PC-3 (cell line): ENCODE measurements at regions of chr1 and their contacts with region 1.

Region 1: DNA sequence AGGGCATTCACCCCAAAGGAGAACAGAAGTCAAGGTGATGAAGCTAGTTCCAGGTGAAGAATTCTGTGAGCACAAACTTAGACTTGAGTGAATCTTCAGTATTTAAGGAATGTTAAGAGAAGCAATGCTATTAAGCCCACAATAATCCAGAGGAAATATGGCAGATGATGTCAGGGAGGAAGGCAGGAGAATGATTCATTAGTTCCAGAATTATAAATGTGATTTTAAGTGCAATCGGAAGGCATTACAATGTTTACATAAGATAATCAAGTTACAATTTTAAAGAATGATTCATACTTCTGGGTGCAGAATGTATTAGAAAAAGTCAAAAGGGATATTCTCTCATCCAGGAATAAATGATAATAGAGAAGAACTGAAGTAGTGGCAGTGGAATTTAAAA is 545.2 kb upstream of the BRINP3 start:
- DNase-seq: peak; percentile 83
- ATAC-seq: peak; percentile 85
- H3K4me3 ChIP-seq: no peak overlapping the region
- H3K27ac ChIP-seq: peak overlapping the region; percentile 55
- H3K4me1 ChIP-seq: peaks cover 17% of the 10 kb centered on the region
- H3K27me3 ChIP-seq: no peaks in the 10 kb centered on the region
- CTCF ChIP-seq: no peak

Region 2: DNA sequence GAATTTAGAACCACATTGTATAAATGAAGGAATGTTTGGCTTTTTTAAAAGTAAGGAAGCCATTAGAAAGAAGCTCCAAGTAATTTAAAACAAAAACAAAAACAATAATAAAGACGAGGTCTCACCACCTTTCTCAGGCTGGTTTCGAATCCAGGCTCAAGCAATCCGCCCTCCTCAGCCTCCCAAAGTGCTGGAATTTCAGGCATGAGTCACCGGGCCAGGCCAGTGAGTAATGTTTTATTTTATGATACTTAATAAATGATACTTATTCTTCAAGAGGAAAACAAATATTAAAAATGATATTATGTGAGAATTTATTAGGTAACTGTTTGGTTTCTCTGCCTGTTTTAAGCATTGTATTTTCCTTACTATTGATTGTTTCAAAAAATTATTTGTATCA is 343.8 kb before region 1 on chr1:
- CTCF ChIA-PET with region 1: no interaction called
- POLR2A ChIA-PET with region 1: no interaction called
- intact Hi-C with region 1: loop called (anchors 1 kb)
- DNase-seq: peak; percentile 85
- ATAC-seq: peak; percentile 97
- H3K4me3 ChIP-seq: no peak overlapping the region
- H3K27ac ChIP-seq: no peak overlapping the region
- H3K4me1 ChIP-seq: peaks cover 10% of the 10 kb centered on the region
- H3K27me3 ChIP-seq: 0 out of 2 replicates have a peak, but pooled peaks cover 5% of the 10 kb centered on the region
- CTCF ChIP-seq: no peak

Region 3: DNA sequence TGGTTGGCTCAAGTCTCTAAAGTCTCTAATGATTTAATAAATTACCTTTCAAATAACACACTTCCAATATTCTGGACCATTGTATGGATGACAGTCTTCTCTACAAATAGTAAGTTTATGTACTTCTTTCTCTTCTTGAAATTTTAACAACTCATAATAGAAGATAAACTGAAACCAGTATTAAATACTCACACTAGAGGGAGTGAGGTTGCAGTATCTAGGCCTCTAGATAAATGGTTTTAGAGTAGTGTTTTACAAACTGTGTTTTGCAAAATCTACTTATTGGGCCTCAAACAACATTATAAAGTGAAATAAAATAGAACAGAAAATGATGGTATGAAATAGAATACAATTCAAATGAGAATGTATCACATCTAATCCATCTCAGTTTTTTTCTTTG is 65.3 kb before region 1 on chr1:
- CTCF ChIA-PET with region 1: no interaction called
- POLR2A ChIA-PET with region 1: no interaction called
- intact Hi-C with region 1: loop called (anchors 5 kb)
- DNase-seq: peak; percentile 30
- ATAC-seq: peak; percentile 70
- H3K4me3 ChIP-seq: no peak overlapping the region
- H3K27ac ChIP-seq: no peak overlapping the region
- H3K4me1 ChIP-seq: no peaks in the 10 kb centered on the region
- H3K27me3 ChIP-seq: no peaks in the 10 kb centered on the region
- CTCF ChIP-seq: peak; percentile 51

Region 4: GRCh38 chr1:192382758-192383157 is 1359.9 kb after region 1 on chr1:
- CTCF ChIA-PET with region 1: no interaction called
- POLR2A ChIA-PET with region 1: no interaction called
- intact Hi-C with region 1: no loop called
- DNase-seq: no peak
- ATAC-seq: no peak
- H3K4me3 ChIP-seq: no peak overlapping the region
- H3K27ac ChIP-seq: no peak overlapping the region
- H3K4me1 ChIP-seq: no peaks in the 10 kb centered on the region
- H3K27me3 ChIP-seq: no peaks in the 10 kb centered on the region
- CTCF ChIP-seq: no peak

Region 5: GRCh38 chr1:192445848-192446489 is 1423.1 kb after region 1 on chr1:
- CTCF ChIA-PET with region 1: no interaction called
- POLR2A ChIA-PET with region 1: no interaction called
- intact Hi-C with region 1: loop called (anchors 10 kb)
- DNase-seq: peak; percentile 61
- ATAC-seq: no peak
- H3K4me3 ChIP-seq: no peak overlapping the region
- H3K27ac ChIP-seq: no peak overlapping the region
- H3K4me1 ChIP-seq: peaks cover 17% of the 10 kb centered on the region
- H3K27me3 ChIP-seq: no peaks in the 10 kb centered on the region
- CTCF ChIP-seq: peak; percentile 70